Heart right ventricle (tissue), 16 donors: ENCODE measurements at regions of chr2 and their contacts with region 1.

Region 1: GRCh38 chr2:136384531-136385303 is 266.8 kb upstream of the CXCR4 start:
- DNase-seq: no peak
- ATAC-seq: peak in 7 of 8 donors; percentile 57 to 81 (median 78)
- H3K4me3 ChIP-seq: no peak overlapping the region
- H3K27ac ChIP-seq: no peak overlapping the region
- H3K4me1 ChIP-seq: peaks cover 0 to 22% (median 0%) of the 10 kb centered on the region in 9 donors
- H3K27me3 ChIP-seq: peaks cover 0 to 4% (median 0%) of the 10 kb centered on the region in 7 donors
- CTCF ChIP-seq: peak; percentile 21 to 72 (median 58)

Region 2: GRCh38 chr2:135913727-135914365 is 470.9 kb before region 1 on chr2:
- intact Hi-C with region 1: loop called in 8 of 10 experiments (anchors 1 to 5 kb)
- DNase-seq: peak in 1 of 2 donors; percentile 29
- ATAC-seq: peak in 1 of 8 donors; percentile 21
- H3K4me3 ChIP-seq: no peak overlapping the region
- H3K27ac ChIP-seq: peak overlapping the region in 1 of 10 donors; percentile 6
- H3K4me1 ChIP-seq: no peaks in the 10 kb centered on the region
- H3K27me3 ChIP-seq: no peaks in the 10 kb centered on the region
- CTCF ChIP-seq: peak; percentile 55 to 86 (median 78)